ENCODE measurements at regions of chr6 and their contacts with region 1.

Region 1: DNA sequence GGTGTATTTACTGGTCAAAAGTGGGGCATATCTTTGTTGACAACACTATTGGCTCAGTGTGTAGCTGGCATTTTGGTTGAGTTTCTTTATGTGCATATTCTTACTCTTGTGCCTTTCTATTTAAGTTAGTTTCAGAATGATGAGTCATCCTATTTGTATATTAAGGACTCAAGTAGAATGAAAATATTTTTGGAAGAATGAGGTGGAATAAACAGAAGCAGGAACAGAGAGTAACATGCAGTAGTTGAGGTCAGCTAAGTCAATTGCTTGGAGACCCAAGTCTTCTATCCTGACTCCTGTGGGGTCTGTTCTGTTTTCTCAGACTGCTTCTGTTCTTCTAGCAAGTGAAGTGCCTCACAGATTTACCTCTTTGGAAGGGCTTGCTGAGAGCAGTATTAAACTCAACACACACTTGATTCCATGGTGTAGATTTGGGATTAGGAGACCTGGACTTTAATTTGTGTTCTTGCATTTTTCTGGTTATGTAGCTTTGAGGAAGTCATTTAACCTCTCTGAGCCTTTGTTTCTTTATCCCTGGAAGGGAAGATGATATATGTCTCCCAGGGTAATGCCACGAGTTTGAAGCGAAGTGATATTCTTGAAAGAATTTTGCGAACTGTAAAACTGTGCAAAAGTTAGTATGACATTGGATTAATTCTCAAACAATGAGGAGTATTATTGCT is 324.3 kb downstream of the QKI start:
- DNase-seq: no peak
- ATAC-seq: no peak
- H3K4me3 ChIP-seq: no peak overlapping the region
- H3K27ac ChIP-seq: no peak overlapping the region
- H3K4me1 ChIP-seq: peaks cover 0 to 20% (median 7%) of the 10 kb centered on the region in 9 donors
- H3K27me3 ChIP-seq: no peaks in the 10 kb centered on the region
- CTCF ChIP-seq: no peak

Region 2: DNA sequence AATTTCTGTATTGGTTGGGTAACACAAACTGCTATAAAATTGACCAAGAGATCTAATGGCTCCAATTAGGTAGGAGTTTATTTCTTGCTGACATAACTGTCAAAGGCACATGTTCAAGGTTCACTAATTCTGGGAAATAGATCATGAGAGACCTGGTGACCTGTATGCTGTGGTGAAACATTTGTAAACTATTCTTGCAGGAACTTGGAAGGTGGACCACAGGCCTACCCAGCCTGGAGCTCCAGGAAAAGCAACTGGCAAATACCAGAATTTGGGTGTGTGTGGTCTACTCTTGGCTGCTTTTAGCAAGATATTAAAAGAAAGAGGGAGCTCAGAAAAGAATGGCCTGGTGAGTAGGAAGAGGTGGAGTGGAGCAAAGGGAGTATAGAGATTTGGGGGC is 139.7 kb before region 1 on chr6:
- intact Hi-C with region 1: loop called in 1 of 10 experiments (anchors 10 kb)
- DNase-seq: no peak
- ATAC-seq: no peak
- H3K4me3 ChIP-seq: no peak overlapping the region
- H3K27ac ChIP-seq: no peak overlapping the region
- H3K4me1 ChIP-seq: peaks cover 0 to 11% (median 0%) of the 10 kb centered on the region in 9 donors
- H3K27me3 ChIP-seq: no peaks in the 10 kb centered on the region
- CTCF ChIP-seq: no peak